B cell (primary cell): ENCODE measurements at regions of chr20 and their contacts with region 1.

Region 1: GRCh38 chr20:23721962-23722361 is 28.8 kb downstream of the CST1 start:
- DNase-seq: no peak
- ATAC-seq: no peak
- H3K4me3 ChIP-seq: no peak overlapping the region
- H3K4me3 Mint-ChIP-seq: no peak overlapping the region
- H3K27ac ChIP-seq: no peak overlapping the region
- H3K27ac Mint-ChIP-seq: no peak overlapping the region
- H3K4me1 ChIP-seq: no peaks in the 10 kb centered on the region
- H3K4me1 Mint-ChIP-seq: no peaks in the 10 kb centered on the region
- H3K27me3 ChIP-seq: no peaks in the 10 kb centered on the region
- H3K27me3 Mint-ChIP-seq: peaks cover 4% of the 10 kb centered on the region
- CTCF ChIP-seq: no peak

Region 2: GRCh38 chr20:23596579-23597250 is 125.2 kb before region 1 on chr20:
- CTCF ChIA-PET with region 1: no interaction called
- POLR2A ChIA-PET with region 1: no interaction called
- intact Hi-C with region 1: no loop called
- DNase-seq: no peak
- ATAC-seq: no peak
- H3K4me3 ChIP-seq: no peak overlapping the region
- H3K4me3 Mint-ChIP-seq: no peak overlapping the region
- H3K27ac ChIP-seq: no peak overlapping the region
- H3K27ac Mint-ChIP-seq: no peak overlapping the region
- H3K4me1 ChIP-seq: no peaks in the 10 kb centered on the region
- H3K4me1 Mint-ChIP-seq: no peaks in the 10 kb centered on the region
- H3K27me3 ChIP-seq: no peaks in the 10 kb centered on the region
- H3K27me3 Mint-ChIP-seq: no peaks in the 10 kb centered on the region
- CTCF ChIP-seq: no peak

Region 3: GRCh38 chr20:23622839-23623343 is 99.1 kb before region 1 on chr20:
- CTCF ChIA-PET with region 1: no interaction called
- POLR2A ChIA-PET with region 1: no interaction called
- intact Hi-C with region 1: no loop called
- DNase-seq: no peak
- ATAC-seq: no peak
- H3K4me3 ChIP-seq: no peak overlapping the region
- H3K4me3 Mint-ChIP-seq: no peak overlapping the region
- H3K27ac ChIP-seq: no peak overlapping the region
- H3K27ac Mint-ChIP-seq: no peak overlapping the region
- H3K4me1 ChIP-seq: peaks cover 0 to 6% of the 10 kb centered on the region in 2 donors
- H3K4me1 Mint-ChIP-seq: peaks cover 4% of the 10 kb centered on the region
- H3K27me3 ChIP-seq: peaks cover 0 to 3% (median 0%) of the 10 kb centered on the region in 4 experiments
- H3K27me3 Mint-ChIP-seq: peaks cover 19% of the 10 kb centered on the region
- CTCF ChIP-seq: no peak

Region 4: DNA sequence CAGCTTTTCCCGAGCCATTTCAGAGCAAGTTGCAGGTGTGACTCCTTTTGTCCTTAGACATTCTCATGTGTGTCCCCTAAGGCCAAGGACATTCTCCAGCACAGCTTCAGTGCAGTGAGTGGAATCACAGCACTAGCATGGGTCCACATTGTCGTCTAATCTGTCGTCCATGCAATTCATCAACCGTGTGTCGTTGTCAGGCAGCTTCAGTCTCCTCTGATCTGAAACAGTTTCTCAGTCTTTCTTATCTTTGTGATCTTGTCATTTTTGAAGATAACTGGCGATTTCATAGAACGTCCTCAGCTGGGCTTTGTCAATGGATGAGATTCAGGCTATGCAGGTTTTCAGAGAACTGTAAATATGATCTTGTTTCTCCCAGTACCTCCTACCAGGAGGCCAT is 72.9 kb after region 1 on chr20:
- CTCF ChIA-PET with region 1: no interaction called
- POLR2A ChIA-PET with region 1: no interaction called
- intact Hi-C with region 1: loop called (anchors 2 kb)
- DNase-seq: no peak
- ATAC-seq: no peak
- H3K4me3 ChIP-seq: no peak overlapping the region
- H3K4me3 Mint-ChIP-seq: no peak overlapping the region
- H3K27ac ChIP-seq: no peak overlapping the region
- H3K27ac Mint-ChIP-seq: no peak overlapping the region
- H3K4me1 ChIP-seq: no peaks in the 10 kb centered on the region
- H3K4me1 Mint-ChIP-seq: no peaks in the 10 kb centered on the region
- H3K27me3 ChIP-seq: no peaks in the 10 kb centered on the region
- H3K27me3 Mint-ChIP-seq: peaks cover 9% of the 10 kb centered on the region
- CTCF ChIP-seq: no peak

Region 5: GRCh38 chr20:23954008-23954745 is 232.2 kb after region 1 on chr20:
- CTCF ChIA-PET with region 1: no interaction called
- POLR2A ChIA-PET with region 1: no interaction called
- intact Hi-C with region 1: no loop called
- DNase-seq: no peak
- ATAC-seq: no peak
- H3K4me3 ChIP-seq: no peak overlapping the region
- H3K4me3 Mint-ChIP-seq: no peak overlapping the region
- H3K27ac ChIP-seq: no peak overlapping the region
- H3K27ac Mint-ChIP-seq: no peak overlapping the region
- H3K4me1 ChIP-seq: no peaks in the 10 kb centered on the region
- H3K4me1 Mint-ChIP-seq: no peaks in the 10 kb centered on the region
- H3K27me3 ChIP-seq: no peaks in the 10 kb centered on the region
- H3K27me3 Mint-ChIP-seq: peaks cover 5% of the 10 kb centered on the region
- CTCF ChIP-seq: no peak